Calu3 (cell line): ENCODE measurements at regions of chr5 and their contacts with region 1.

Region 1: GRCh38 chr5:44332285-44332971 is 56.8 kb downstream of the FGF10 start:
- DNase-seq: peak; percentile 3
- H3K4me3 Mint-ChIP-seq: no peak overlapping the region
- H3K27ac Mint-ChIP-seq: no peak overlapping the region
- H3K4me1 Mint-ChIP-seq: no peaks in the 10 kb centered on the region
- H3K27me3 Mint-ChIP-seq: no peaks in the 10 kb centered on the region
- CTCF ChIP-seq: peak; percentile 39

Region 2: GRCh38 chr5:43631182-43631910 is 701.1 kb before region 1 on chr5:
- CTCF ChIA-PET with region 1: interaction called, 8 read pairs
- intact Hi-C with region 1: loop called (anchors 2 kb)
- DNase-seq: peak; percentile 50
- H3K4me3 Mint-ChIP-seq: no peak overlapping the region
- H3K27ac Mint-ChIP-seq: no peak overlapping the region
- H3K4me1 Mint-ChIP-seq: peaks cover 24% of the 10 kb centered on the region
- H3K27me3 Mint-ChIP-seq: no peaks in the 10 kb centered on the region
- CTCF ChIP-seq: peak; percentile 44

Region 3: DNA sequence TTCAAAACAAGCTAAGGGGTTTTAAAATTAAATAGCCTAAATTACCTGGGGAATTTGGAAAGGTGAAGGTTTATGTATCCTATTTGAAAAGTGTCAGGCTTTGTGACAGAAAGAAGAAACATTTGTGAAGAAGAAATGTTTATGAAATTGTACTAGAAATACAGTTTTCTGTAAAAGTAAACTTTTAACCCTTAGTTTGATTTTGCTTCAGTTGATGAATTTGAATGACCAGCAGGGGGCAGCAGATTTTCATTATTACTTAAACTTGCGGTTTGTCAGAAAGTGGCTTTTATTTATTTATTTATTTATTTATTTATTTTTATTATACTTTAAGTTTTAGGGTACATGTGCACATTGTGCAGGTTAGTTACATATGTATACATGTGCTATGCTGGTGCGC is 671.3 kb before region 1 on chr5:
- CTCF ChIA-PET with region 1: interaction called, 3 read pairs
- intact Hi-C with region 1: loop called (anchors 2 kb)
- DNase-seq: peak; percentile 41
- H3K4me3 Mint-ChIP-seq: no peak overlapping the region
- H3K27ac Mint-ChIP-seq: no peak overlapping the region
- H3K4me1 Mint-ChIP-seq: no peaks in the 10 kb centered on the region
- H3K27me3 Mint-ChIP-seq: no peaks in the 10 kb centered on the region
- CTCF ChIP-seq: no peak

Region 4: GRCh38 chr5:44002381-44002901 is 330.0 kb before region 1 on chr5:
- CTCF ChIA-PET with region 1: no interaction called
- intact Hi-C with region 1: loop called (anchors 5 kb)
- DNase-seq: peak; percentile 61
- H3K4me3 Mint-ChIP-seq: peak overlapping the region; percentile 18
- H3K27ac Mint-ChIP-seq: peak overlapping the region; percentile 91
- H3K4me1 Mint-ChIP-seq: peaks cover 53% of the 10 kb centered on the region
- H3K27me3 Mint-ChIP-seq: no peaks in the 10 kb centered on the region
- CTCF ChIP-seq: no peak

Region 5: DNA sequence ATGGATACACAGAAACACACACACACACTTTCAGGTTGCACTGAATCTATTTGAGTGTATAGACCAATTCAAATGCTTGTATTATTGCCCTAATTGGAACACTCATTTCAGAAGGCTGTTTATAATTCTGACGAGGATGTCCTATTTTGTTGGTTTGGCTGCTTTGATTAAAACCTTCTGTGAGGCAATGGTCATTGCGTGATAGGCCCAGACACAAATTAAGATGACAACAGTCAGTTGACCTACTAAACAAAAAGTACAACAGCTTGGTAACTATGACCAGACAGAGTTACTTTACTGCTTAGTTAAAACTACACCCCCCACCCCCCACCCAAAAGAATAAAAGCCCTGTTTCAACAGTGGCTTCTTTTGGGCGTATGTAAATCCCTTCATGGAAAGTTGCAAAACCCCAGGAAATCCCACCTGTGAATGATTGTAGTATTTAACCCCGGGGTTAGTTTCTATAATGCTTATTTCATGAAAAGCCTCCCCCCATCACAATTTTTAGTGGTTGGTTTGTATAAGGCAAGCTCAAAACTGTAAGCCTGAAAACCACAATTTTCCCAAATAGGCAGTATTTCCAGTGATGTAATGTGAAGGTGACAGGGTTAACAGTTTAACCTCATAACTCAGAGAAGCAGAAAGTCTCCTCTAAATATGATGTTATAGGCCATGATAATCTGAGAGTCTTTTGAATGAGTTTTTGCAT is 284.0 kb before region 1 on chr5:
- CTCF ChIA-PET with region 1: no interaction called
- intact Hi-C with region 1: no loop called
- DNase-seq: no peak
- H3K4me3 Mint-ChIP-seq: no peak overlapping the region
- H3K27ac Mint-ChIP-seq: no peak overlapping the region
- H3K4me1 Mint-ChIP-seq: no peaks in the 10 kb centered on the region
- H3K27me3 Mint-ChIP-seq: no peaks in the 10 kb centered on the region
- CTCF ChIP-seq: no peak

Region 6: GRCh38 chr5:44183753-44184152 is 148.7 kb before region 1 on chr5:
- CTCF ChIA-PET with region 1: no interaction called
- intact Hi-C with region 1: no loop called
- DNase-seq: no peak
- H3K4me3 Mint-ChIP-seq: no peak overlapping the region
- H3K27ac Mint-ChIP-seq: no peak overlapping the region
- H3K4me1 Mint-ChIP-seq: no peaks in the 10 kb centered on the region
- H3K27me3 Mint-ChIP-seq: no peaks in the 10 kb centered on the region
- CTCF ChIP-seq: no peak

Region 7: DNA sequence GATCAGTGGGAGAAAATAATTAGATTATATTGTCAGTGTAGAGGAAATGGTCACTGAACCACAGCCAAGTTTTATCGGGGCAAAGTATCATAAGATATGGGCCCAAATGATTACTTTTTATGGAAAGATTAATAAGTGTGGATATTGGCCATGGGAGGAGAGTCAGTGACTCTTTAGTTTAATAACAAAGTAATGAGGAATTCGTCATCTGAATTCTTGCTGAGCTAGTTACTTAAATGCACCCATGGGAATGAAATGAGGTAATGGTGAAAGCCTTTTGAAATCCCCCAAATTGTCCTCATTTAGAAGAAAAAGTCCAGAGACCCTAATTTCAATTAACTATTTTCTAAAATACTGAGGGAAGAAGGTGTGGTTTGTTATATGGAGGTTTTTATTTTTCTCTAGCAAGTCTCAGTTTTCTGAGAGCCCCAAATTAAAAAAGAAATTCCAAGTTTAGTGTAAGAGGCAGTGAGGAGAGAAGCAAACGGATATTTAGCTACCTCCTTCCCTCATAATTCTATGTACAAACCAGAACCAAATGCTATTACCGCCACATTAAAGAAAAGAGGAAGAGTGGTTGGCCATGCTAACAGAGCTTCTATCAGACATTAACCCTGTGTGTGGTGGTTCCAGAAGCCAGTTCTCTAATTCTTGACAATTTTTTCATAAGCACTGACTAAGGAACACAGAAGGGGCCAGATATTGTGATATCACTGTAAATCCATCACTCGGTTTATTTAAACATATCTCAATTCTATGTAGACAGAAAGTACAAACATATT is 438.7 kb after region 1 on chr5:
- CTCF ChIA-PET with region 1: no interaction called
- intact Hi-C with region 1: no loop called
- DNase-seq: no peak
- H3K4me3 Mint-ChIP-seq: no peak overlapping the region
- H3K27ac Mint-ChIP-seq: no peak overlapping the region
- H3K4me1 Mint-ChIP-seq: no peaks in the 10 kb centered on the region
- H3K27me3 Mint-ChIP-seq: no peaks in the 10 kb centered on the region
- CTCF ChIP-seq: no peak